Breast epithelium (tissue), 4 donors: ENCODE measurements at regions of chr6 and their contacts with region 1.

Region 1: GRCh38 chr6:134797400-134798113 is 152.3 kb downstream of the ALDH8A1 start:
- DNase-seq: no peak
- H3K4me3 ChIP-seq: no peak overlapping the region
- H3K27ac ChIP-seq: no peak overlapping the region
- H3K4me1 ChIP-seq: no peaks in the 10 kb centered on the region
- H3K27me3 ChIP-seq: no peaks in the 10 kb centered on the region
- CTCF ChIP-seq: no peak
- POLR2A ChIP-seq: no peak

Region 2: DNA sequence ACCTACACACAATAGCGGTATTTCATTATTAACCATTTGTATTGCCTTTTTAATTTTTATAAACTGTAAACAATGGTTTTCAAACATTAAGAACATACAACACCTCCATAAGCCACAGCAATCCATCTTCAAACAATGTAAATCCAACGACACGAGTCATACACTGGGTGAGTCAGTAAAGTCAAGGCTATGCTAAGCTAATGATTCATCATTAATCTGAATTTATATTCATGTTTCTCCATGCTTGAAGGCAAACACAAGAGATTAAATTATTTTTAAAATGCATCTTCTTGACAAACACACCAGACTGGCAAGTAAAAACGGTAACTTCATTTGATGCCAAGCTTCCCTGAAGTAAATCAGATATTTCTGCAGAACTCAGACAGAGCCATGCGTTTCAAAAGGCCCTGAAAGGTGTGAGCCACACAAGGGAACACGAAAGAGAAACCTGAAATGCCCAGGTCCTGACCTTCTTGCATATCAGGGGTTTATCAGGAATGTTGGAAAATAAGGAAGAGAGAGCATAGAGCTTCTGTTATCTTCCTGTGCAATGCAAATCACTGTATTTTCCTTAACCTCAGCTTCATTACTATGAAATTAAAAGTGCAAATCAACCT is 10.2 kb before region 1 on chr6:
- intact Hi-C with region 1: loop called (anchors 1 kb)
- DNase-seq: no peak
- H3K4me3 ChIP-seq: no peak overlapping the region
- H3K27ac ChIP-seq: no peak overlapping the region
- H3K4me1 ChIP-seq: no peaks in the 10 kb centered on the region
- H3K27me3 ChIP-seq: no peaks in the 10 kb centered on the region
- CTCF ChIP-seq: no peak
- POLR2A ChIP-seq: no peak

Region 3: GRCh38 chr6:134853111-134854055 is 55.8 kb after region 1 on chr6:
- intact Hi-C with region 1: no loop called
- DNase-seq: no peak
- H3K4me3 ChIP-seq: no peak overlapping the region
- H3K27ac ChIP-seq: peak overlapping the region; percentile 23 to 77
- H3K4me1 ChIP-seq: no peaks in the 10 kb centered on the region
- H3K27me3 ChIP-seq: no peaks in the 10 kb centered on the region
- CTCF ChIP-seq: no peak
- POLR2A ChIP-seq: no peak